Activated CD8-positive, alpha-beta memory T cell treated with anti-CD3 and anti-CD28 coated beads, Interleukin-2, amount 10 ng/mL, durations not matched to agents 7 days and 5 days (primary cell): ENCODE measurements at regions of chr16 and their contacts with region 1.

Region 1: DNA sequence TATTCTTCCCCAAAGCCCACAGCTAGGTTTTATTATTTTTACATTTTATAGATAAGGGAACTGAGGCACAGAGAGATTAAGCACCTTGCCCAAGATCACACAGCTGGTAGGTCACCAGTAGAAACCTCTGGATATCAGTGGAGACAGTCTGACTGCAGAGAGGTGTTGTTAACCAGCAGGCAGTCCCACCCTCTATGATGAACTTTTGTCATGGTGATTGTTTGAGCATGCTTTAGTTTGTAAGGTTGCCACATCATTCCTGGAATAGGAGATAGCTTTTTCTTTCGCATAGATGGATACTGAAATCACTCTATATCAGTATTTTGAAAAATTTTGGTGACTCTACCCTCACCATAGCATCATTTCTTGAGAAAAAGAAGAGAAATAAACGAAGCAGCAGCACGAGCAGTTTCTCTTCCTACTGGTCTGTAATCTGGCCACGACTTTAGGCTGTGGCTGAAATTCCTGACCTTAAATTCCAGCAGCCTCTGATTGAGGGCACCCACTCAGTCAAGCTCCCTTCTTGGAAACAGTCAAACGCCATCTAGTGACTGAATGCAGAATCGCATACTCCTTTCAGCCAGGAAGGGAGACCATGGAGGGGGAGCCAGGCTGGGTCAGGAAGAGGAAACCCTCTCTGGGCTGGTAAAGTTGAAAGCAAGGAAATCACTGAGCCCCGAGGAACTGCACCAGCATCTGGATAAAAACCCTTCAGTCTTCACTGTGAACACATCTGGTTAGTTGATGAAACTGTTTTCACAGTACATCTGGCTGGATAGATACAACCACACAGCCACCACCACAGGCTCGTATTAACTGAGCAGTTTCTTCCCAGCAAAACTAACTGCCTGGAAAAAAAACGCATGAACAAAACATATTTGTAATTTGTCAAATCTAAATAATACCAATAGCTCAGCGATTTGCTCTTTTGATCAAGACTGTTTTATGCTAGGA is 108.4 kb upstream of the XYLT1 start:
- DNase-seq: peak; percentile 72
- ATAC-seq: peak; percentile 66
- H3K4me3 Mint-ChIP-seq: no peak overlapping the region
- H3K27ac Mint-ChIP-seq: no peak overlapping the region
- H3K4me1 Mint-ChIP-seq: peaks cover 4% of the 10 kb centered on the region
- H3K27me3 Mint-ChIP-seq: peaks cover 11% of the 10 kb centered on the region

Region 2: DNA sequence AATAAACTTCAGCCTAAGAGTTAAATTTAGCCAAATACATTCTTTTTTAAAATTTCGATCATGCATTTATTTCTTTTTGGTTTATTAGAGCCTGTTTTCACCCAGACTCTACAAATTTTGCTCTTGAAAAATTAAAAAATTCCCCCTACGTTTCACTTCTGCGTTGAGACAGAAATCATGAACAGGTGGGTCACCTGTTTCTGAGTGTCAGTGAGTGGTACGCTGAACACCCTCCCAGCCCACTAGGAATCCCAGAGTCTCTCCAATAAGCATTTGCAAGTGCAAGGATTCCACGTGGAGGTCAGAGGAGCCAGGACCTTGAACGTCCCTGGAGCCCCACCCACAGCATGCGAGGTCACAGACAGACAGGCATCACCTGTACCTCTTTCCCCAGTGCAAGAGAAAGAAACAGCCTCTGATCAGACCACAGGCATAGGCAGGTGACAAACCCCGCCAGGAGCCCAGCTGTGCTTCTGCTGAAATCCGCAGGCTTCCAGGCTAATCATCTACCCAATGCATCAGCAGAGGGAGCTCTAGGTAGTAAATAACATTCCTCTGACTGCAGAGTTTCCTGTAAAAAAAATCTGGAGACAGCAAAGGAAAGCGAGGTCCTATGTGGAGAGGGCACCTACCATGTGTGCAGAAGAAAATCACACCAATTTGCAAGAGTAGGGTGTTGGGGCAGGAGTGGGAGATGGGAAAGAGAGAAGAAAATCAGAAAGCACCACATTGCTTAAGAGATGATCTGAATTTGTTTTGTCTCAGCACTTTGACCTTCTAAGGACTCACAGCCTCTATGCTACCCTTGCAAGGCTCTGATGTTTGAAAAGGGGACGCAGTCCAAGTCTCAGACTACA is 102.6 kb before region 1 on chr16:
- CTCF ChIA-PET with region 1: interaction called, 10 read pairs
- DNase-seq: peak; percentile 66
- ATAC-seq: peak; percentile 68
- H3K4me3 Mint-ChIP-seq: no peak overlapping the region
- H3K27ac Mint-ChIP-seq: no peak overlapping the region
- H3K4me1 Mint-ChIP-seq: peaks cover 40% of the 10 kb centered on the region
- H3K27me3 Mint-ChIP-seq: peaks cover 18% of the 10 kb centered on the region

Region 3: GRCh38 chr16:17548825-17549224 is 30.4 kb before region 1 on chr16:
- CTCF ChIA-PET with region 1: interaction called, 10 read pairs
- DNase-seq: no peak
- ATAC-seq: no peak
- H3K4me3 Mint-ChIP-seq: no peak overlapping the region
- H3K27ac Mint-ChIP-seq: no peak overlapping the region
- H3K4me1 Mint-ChIP-seq: peaks cover 3% of the 10 kb centered on the region
- H3K27me3 Mint-ChIP-seq: peaks cover 7% of the 10 kb centered on the region

Region 4: GRCh38 chr16:17557480-17557879 is 21.7 kb before region 1 on chr16:
- CTCF ChIA-PET with region 1: interaction called, 12 read pairs
- DNase-seq: peak; percentile 53
- ATAC-seq: peak; percentile 65
- H3K4me3 Mint-ChIP-seq: no peak overlapping the region
- H3K27ac Mint-ChIP-seq: no peak overlapping the region
- H3K4me1 Mint-ChIP-seq: peaks cover 9% of the 10 kb centered on the region
- H3K27me3 Mint-ChIP-seq: peaks cover 18% of the 10 kb centered on the region

Region 5: DNA sequence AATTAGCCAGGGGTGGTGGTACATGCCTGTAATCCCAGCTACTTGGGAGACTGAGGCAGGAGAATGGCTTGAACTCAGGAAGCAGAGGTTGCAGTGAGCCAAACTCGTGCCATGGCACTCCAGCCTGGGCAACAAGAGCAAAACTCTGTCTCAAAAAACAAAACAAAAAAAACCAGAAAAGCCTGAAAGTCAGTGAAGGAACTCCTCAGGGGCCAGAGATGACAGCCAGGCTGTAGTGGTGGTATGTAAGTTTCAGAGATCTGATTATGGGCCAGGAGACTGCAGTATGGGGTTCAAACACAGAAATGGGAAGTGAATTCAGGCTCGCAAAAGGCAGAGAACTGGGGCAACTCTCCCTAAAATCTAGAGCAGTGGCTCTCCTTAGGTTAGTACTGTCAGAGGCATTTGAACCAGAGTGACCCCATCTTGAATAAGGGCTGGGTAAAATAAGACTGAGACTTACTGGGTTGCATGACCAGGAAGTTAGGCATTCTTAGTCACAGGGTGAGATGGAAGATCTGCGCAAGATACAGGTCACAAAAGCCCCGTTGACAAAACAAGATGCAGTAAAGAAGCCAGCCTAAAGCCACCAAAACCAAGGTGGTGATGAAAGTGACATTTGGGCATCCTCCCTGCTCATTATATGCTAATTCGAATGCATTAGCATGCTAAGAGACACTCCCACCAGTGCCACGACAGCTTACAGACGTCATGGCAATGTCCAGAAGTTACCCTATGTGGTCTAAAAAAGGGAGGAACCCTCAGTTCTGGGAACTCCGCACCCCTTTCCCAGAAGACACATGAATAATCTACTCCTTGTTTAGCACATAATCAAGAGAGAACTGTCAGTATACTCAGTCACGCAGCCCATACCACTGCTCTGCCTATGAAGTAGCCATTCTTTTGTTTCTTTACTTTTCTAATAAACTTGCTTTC is 11.8 kb after region 1 on chr16:
- CTCF ChIA-PET with region 1: interaction called, 16 read pairs
- DNase-seq: peak; percentile 90
- ATAC-seq: peak; percentile 86
- H3K4me3 Mint-ChIP-seq: peak overlapping the region; percentile 6
- H3K27ac Mint-ChIP-seq: peak overlapping the region; percentile 81
- H3K4me1 Mint-ChIP-seq: peaks cover 19% of the 10 kb centered on the region
- H3K27me3 Mint-ChIP-seq: peaks cover 11% of the 10 kb centered on the region

Region 6: DNA sequence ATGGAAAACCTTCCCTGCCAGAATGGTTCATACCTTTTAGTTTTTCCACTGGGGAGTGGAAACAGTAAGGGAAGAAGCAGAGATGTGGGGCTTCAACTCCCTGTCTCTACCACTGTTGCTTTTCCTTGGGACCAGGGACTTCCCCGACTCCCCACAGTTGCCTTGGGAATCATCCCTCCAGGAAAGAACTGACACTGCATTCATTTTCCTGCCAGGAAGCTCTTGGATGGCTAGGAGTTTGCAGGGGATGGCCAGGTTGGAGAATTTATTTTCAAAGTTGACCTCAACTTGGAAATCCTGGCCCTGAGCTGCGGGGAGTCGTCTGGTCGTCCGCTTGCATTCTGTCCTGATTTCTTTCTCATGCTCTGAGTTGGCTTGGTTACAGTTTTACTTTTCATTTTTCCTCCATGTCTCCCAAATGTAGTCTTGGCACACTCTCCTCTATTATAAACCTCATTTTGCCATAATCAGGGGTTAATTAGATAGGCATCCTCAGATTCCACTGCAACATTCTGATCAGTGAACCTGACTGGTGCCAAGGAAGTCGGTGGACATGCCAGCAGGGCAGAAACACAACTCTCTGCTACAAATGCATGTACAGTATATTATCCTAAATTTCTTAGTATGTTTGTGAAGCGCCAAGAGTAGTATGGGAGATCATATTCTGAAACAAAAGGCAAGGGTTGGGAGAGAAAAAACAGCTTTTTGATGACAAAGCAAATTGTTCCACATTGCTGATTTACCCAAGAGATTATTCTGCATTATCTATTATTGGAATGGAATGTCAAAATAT is 112.1 kb after region 1 on chr16:
- CTCF ChIA-PET with region 1: no interaction called
- DNase-seq: no peak
- ATAC-seq: no peak
- H3K4me3 Mint-ChIP-seq: no peak overlapping the region
- H3K27ac Mint-ChIP-seq: no peak overlapping the region
- H3K4me1 Mint-ChIP-seq: no peaks in the 10 kb centered on the region
- H3K27me3 Mint-ChIP-seq: peaks cover 12% of the 10 kb centered on the region